Ascending aorta (tissue), 2 donors: ENCODE measurements at regions of chr11 and their contacts with region 1.

Region 1: GRCh38 chr11:69642913-69643632 is 2.1 kb downstream of the CCND1 start:
- DNase-seq: peak in 1 of 2 donors; percentile 86
- H3K4me3 ChIP-seq: peak overlapping the region; percentile 88
- H3K27ac ChIP-seq: peak overlapping the region; percentile 77 to 84
- H3K4me1 ChIP-seq: peaks cover 10 to 35% of the 10 kb centered on the region in 2 donors
- H3K27me3 ChIP-seq: no peaks in the 10 kb centered on the region
- CTCF ChIP-seq: peak; percentile 77 to 98 (median 91)

Region 2: GRCh38 chr11:68839054-68839865 is 803.8 kb before region 1 on chr11:
- intact Hi-C with region 1: loop called (anchors 5 kb)
- DNase-seq: peak; percentile 72 to 98
- H3K4me3 ChIP-seq: peak overlapping the region; percentile 87 to 94
- H3K27ac ChIP-seq: peak overlapping the region; percentile 95
- H3K4me1 ChIP-seq: peaks cover 19 to 68% of the 10 kb centered on the region in 2 donors
- H3K27me3 ChIP-seq: no peaks in the 10 kb centered on the region
- CTCF ChIP-seq: peak in 1 of 3 experiments; percentile 9

Region 3: DNA sequence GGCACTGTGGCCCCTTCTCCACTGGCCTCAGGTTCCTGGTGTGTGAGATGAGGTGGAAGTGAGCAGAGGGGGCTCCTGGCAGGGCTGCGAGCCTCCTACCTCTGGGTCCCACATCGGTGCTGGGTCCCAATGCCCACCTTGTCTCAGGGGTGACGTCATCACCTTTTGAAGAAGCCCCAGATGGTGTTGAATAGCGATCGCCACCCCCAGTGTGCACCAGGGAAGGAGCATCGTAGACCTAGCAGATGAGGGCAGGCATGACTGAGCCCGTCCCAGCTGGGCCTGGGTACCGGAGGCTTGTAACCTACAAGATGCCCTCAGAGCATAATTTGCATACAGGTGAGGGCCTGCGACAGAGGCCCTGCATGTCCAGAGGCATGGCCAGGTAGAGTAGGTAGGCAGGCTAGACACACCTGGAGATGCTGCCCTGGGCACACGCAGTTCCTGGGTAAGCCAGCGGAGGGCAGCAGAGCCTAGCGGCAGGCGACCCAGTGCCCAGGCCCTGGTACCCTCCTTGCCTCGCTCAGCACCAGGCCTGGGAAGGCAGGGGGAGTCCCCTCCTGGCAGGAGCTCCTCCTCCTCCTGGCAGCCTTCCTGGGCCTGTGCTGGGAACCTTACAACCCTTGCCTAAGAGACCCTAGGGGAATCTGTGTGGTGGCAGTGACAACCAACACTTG is 541.8 kb before region 1 on chr11:
- intact Hi-C with region 1: loop called (anchors 1 kb)
- DNase-seq: peak in 1 of 2 donors; percentile 89
- H3K4me3 ChIP-seq: no peak overlapping the region
- H3K27ac ChIP-seq: no peak overlapping the region
- H3K4me1 ChIP-seq: peaks cover 0 to 4% of the 10 kb centered on the region in 2 donors
- H3K27me3 ChIP-seq: no peaks in the 10 kb centered on the region
- CTCF ChIP-seq: peak; percentile 98 to 99 (median 99)

Region 4: GRCh38 chr11:69296890-69297786 is 345.9 kb before region 1 on chr11:
- intact Hi-C with region 1: loop called (anchors 1 kb)
- DNase-seq: peak; percentile 85 to 98
- H3K4me3 ChIP-seq: peak overlapping the region in 1 of 2 donors; percentile 39
- H3K27ac ChIP-seq: peak overlapping the region; percentile 85 to 93
- H3K4me1 ChIP-seq: peaks cover 25 to 36% of the 10 kb centered on the region in 2 donors
- H3K27me3 ChIP-seq: no peaks in the 10 kb centered on the region
- CTCF ChIP-seq: no peak

Region 5: DNA sequence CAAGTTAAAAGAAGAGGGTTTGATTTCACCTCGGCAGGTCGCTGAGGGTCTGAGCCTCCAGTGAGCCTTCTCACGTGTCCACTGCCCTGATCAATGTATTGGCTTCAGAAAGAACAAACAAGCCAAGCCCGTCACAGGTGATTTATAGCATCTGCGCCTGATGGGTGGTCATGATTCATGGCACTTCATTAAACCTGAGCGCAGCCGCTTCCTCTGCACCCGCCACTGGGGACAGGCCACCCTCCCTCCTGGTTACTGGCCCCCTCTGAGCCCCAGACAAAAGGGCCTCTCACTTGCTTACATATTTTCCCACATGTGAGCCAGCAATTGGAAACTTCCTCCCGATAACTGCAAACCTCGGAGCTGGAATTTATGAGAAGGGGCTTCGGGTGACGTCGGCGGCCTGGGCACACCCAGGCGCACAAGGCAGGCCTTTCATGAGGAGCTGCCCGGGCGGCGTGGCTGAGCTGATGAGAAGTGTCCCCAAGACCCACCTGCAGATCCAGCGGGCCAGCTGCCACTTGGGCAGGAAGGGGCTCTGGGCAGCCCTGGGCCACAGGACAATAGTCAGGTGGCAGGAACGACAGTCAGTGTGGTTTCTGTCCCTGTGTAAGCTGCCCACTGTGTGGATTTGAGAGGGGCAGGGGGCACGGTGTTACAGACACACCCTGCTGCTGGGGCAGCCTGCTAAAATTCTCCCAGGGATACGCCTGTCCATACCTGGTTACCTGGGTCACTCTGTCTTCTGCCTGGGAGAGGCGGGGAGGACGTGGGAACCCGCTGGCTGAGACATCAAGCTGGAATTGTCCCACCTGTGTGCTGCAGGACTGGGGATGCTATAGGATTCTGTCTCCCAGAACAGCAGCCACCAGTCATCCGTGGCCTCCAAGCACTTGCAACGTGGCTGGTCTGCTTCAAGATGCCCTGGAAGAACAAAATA is 225.7 kb before region 1 on chr11:
- intact Hi-C with region 1: loop called (anchors 5 kb)
- DNase-seq: no peak
- H3K4me3 ChIP-seq: no peak overlapping the region
- H3K27ac ChIP-seq: peak overlapping the region; percentile 63 to 66
- H3K4me1 ChIP-seq: peaks cover 6 to 32% of the 10 kb centered on the region in 2 donors
- H3K27me3 ChIP-seq: no peaks in the 10 kb centered on the region
- CTCF ChIP-seq: no peak

Region 6: DNA sequence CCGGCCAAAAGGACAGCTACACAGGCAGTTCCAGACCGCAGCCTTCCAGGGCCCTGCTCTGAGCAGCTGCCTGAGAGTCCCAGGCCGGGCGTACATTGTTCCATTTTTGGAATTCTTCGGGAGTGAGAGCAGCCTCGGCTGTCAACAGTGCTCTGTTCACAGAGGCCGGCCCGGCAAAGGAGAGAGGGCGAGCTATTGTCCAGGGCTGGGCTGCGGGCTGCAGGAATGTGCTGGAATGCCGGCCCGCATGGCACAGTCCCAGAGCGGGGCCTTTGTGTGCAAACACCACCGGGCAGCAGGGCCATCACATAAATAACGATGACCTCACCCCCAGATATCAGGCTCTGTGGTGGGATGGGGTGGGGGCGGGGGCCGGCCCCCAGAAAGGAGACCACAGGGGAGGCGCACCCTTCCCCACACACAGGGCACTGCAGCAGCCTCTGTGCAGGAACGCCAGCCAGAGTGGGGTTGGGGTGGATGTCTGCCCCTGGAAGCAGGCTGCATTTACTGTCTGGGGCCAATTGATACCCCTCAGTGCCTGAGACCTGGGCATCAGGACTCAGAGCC is 145.8 kb before region 1 on chr11:
- intact Hi-C with region 1: loop called (anchors 2 kb)
- DNase-seq: peak in 1 of 2 donors; percentile 91
- H3K4me3 ChIP-seq: no peak overlapping the region
- H3K27ac ChIP-seq: peak overlapping the region; percentile 63 to 77
- H3K4me1 ChIP-seq: peaks cover 10 to 23% of the 10 kb centered on the region in 2 donors
- H3K27me3 ChIP-seq: no peaks in the 10 kb centered on the region
- CTCF ChIP-seq: no peak

Region 7: GRCh38 chr11:70029115-70029830 is 386.2 kb after region 1 on chr11:
- intact Hi-C with region 1: no loop called
- DNase-seq: peak in 1 of 2 donors; percentile 56
- H3K4me3 ChIP-seq: no peak overlapping the region
- H3K27ac ChIP-seq: peak overlapping the region; percentile 71 to 80
- H3K4me1 ChIP-seq: peaks cover 7 to 15% of the 10 kb centered on the region in 2 donors
- H3K27me3 ChIP-seq: no peaks in the 10 kb centered on the region
- CTCF ChIP-seq: peak in 1 of 3 experiments; percentile 11